ENCODE measurements at regions of chr2 and their contacts with region 1.

Region 1: DNA sequence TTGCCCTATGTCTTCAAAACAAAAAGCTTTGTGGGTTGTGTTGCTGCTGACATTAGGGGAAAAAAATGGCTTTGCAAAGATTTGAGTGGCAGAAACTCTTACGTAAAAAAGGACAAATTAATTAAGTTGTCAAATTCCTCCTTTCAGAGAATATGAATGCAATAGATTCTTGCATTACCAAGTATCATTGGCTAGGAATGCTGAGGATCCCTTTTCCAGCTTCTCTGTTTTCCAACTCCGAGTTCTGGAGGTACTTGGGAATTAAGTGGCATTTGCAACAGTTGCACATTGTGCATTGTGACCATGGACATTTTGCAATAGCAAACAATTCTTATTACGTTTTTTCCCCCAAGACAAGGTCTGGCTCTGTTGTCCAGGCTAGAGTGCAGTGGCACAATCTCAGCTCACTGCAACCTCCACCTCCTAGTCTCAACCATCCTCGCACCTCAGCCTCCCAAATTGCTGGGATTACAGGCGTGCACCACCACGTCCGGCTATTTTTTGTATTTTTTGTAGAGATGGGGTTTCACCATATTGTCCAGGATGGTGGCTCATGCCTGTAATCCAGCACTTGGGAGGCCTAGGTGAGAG is 29.9 kb upstream of the PPP1CB start:
- DNase-seq: no peak
- H3K4me3 ChIP-seq: no peak overlapping the region
- H3K4me3 Mint-ChIP-seq: no peak overlapping the region
- H3K27ac Mint-ChIP-seq: no peak overlapping the region
- H3K4me1 ChIP-seq: peaks cover 11% of the 10 kb centered on the region
- H3K4me1 Mint-ChIP-seq: peaks cover 11% of the 10 kb centered on the region
- H3K27me3 ChIP-seq: no peaks in the 10 kb centered on the region
- H3K27me3 Mint-ChIP-seq: no peaks in the 10 kb centered on the region
- CTCF ChIP-seq: no peak

Region 2: DNA sequence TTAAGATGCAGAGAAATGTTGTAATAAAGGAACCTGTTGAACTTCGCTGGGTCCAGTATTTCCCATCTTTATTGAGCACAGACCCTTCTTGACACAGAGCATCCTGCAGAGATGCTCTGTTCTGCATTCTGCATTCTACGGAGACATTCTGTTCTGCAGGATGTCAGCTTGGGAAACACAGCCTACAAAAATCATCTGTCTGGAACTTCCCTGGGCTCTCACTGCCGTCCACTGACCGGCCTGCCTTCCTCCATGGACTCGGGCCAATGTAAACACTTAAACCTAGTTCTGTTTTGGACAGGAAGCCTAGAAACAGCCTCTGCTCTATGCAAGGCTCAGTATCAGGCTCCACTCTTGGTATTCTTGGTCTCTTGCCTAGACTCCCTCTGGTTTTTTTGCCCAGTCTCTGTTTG is 60.1 kb before region 1 on chr2:
- CTCF ChIA-PET with region 1: no interaction called
- POLR2A ChIA-PET with region 1: no interaction called
- intact Hi-C with region 1: loop called (anchors 5 kb)
- DNase-seq: no peak
- H3K4me3 ChIP-seq: no peak overlapping the region
- H3K4me3 Mint-ChIP-seq: no peak overlapping the region
- H3K27ac Mint-ChIP-seq: no peak overlapping the region
- H3K4me1 ChIP-seq: peaks cover 47% of the 10 kb centered on the region
- H3K4me1 Mint-ChIP-seq: peaks cover 39% of the 10 kb centered on the region
- H3K27me3 ChIP-seq: no peaks in the 10 kb centered on the region
- H3K27me3 Mint-ChIP-seq: no peaks in the 10 kb centered on the region
- CTCF ChIP-seq: no peak

Measured in Caco-2 (cell line).